ENCODE measurements at regions of chrX and their contacts with region 1.

Region 1: GRCh38 chrX:71181910-71182799 is 37.5 kb downstream of the NLGN3 start:
- DNase-seq: peak; percentile 80
- H3K4me3 Mint-ChIP-seq: peak overlapping the region; percentile 91
- H3K27ac Mint-ChIP-seq: peak overlapping the region; percentile 98
- H3K4me1 Mint-ChIP-seq: peaks cover 26% of the 10 kb centered on the region
- H3K27me3 Mint-ChIP-seq: no peaks in the 10 kb centered on the region

Region 2: DNA sequence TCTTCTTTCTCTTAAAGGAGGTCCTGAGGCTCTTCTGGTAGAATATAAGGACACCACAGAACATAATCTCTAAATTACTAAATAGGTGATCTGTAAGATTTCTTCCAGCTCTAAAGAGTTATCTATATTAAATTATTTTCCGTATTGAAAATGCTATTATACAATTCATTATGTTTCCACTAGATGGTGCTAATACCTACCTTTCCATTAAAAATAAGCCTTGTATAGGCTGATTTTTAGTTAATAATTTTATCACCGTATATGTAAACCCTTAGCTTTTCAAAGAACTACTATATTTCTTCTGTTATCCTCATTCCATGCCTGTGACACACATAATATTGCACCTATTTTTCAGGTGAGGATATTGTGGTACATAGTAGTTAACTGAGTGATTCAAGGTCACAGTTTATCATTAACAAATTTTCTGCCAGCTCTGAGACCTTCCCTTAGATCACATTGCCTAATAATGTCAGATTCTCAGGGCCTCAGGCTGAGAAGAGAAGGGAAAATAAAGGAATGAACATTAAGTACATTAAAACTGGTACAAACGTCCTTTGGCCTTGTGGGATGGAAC is 412.4 kb before region 1 on chrX:
- intact Hi-C with region 1: loop called (anchors 5 kb)
- DNase-seq: no peak
- H3K4me3 Mint-ChIP-seq: no peak overlapping the region
- H3K27ac Mint-ChIP-seq: no peak overlapping the region
- H3K4me1 Mint-ChIP-seq: no peaks in the 10 kb centered on the region
- H3K27me3 Mint-ChIP-seq: peaks cover 2% of the 10 kb centered on the region

Region 3: GRCh38 chrX:71017389-71017944 is 164.7 kb before region 1 on chrX:
- intact Hi-C with region 1: no loop called
- DNase-seq: no peak
- H3K4me3 Mint-ChIP-seq: no peak overlapping the region
- H3K27ac Mint-ChIP-seq: no peak overlapping the region
- H3K4me1 Mint-ChIP-seq: no peaks in the 10 kb centered on the region
- H3K27me3 Mint-ChIP-seq: no peaks in the 10 kb centered on the region

Region 4: GRCh38 chrX:71095543-71095911 is 86.6 kb before region 1 on chrX and contains the start of gene FOXO4:
- intact Hi-C with region 1: loop called (anchors 1 kb)
- DNase-seq: peak; percentile 81
- H3K4me3 Mint-ChIP-seq: peak within 1 kb of the TSS; percentile 93
- H3K27ac Mint-ChIP-seq: peak within 1 kb of the TSS; percentile 91
- H3K4me1 Mint-ChIP-seq: peaks cover 33% of the 10 kb centered on the region
- H3K27me3 Mint-ChIP-seq: peaks cover 8% of the 10 kb centered on the region
- total RNA-seq, gene FOXO4: 10.7 and 11.9 TPM in 2 replicates

Region 5: GRCh38 chrX:71198066-71198465 is 15.9 kb after region 1 on chrX:
- intact Hi-C with region 1: loop called (anchors 1 kb)
- DNase-seq: no peak
- H3K4me3 Mint-ChIP-seq: peak overlapping the region; percentile 94
- H3K27ac Mint-ChIP-seq: peak overlapping the region; percentile 92
- H3K4me1 Mint-ChIP-seq: peaks cover 21% of the 10 kb centered on the region
- H3K27me3 Mint-ChIP-seq: no peaks in the 10 kb centered on the region

Region 6: GRCh38 chrX:71365876-71366673 is 183.9 kb after region 1 on chrX and contains the start of gene TAF1:
- intact Hi-C with region 1: loop called (anchors 1 kb)
- DNase-seq: peak; percentile 88
- H3K4me3 Mint-ChIP-seq: peak within 1 kb of the TSS; percentile 97
- H3K27ac Mint-ChIP-seq: peak within 1 kb of the TSS; percentile 99
- H3K4me1 Mint-ChIP-seq: peaks cover 21% of the 10 kb centered on the region
- H3K27me3 Mint-ChIP-seq: no peaks in the 10 kb centered on the region
- total RNA-seq, gene TAF1: 41.4 and 46.1 TPM in 2 replicates